Calu3 (cell line): ENCODE measurements at regions of chr3 and their contacts with region 1.

Region 1: GRCh38 chr3:107938143-107938542 is 152.7 kb downstream of the CD47 start:
- DNase-seq: peak; percentile 50
- H3K4me3 Mint-ChIP-seq: no peak overlapping the region
- H3K27ac Mint-ChIP-seq: peak overlapping the region; percentile 21
- H3K4me1 Mint-ChIP-seq: peaks cover 12% of the 10 kb centered on the region
- H3K27me3 Mint-ChIP-seq: no peaks in the 10 kb centered on the region
- CTCF ChIP-seq: no peak

Region 2: GRCh38 chr3:107916166-107916565 is 22.0 kb before region 1 on chr3:
- CTCF ChIA-PET with region 1: no interaction called
- intact Hi-C with region 1: no loop called
- DNase-seq: no peak
- H3K4me3 Mint-ChIP-seq: no peak overlapping the region
- H3K27ac Mint-ChIP-seq: no peak overlapping the region
- H3K4me1 Mint-ChIP-seq: no peaks in the 10 kb centered on the region
- H3K27me3 Mint-ChIP-seq: no peaks in the 10 kb centered on the region
- CTCF ChIP-seq: no peak

Region 3: DNA sequence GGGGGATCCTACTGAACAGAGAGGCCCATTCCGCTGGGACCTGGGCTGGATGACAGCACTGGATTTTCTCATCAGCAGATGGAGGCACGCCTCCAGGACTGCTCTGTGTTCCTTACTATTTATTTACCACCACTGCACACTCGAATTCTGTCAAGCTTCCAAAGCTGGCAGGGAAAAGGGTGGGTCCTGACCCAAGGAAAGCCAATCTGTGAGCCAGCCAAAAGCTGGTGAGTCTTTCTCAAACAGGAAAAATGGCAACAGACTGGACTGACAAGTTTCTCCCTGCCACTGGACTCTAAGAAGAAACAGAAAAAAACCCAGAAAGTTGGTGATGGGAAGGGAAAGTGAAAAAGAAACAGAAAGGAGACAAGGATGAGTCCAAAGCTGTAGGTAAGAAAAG is 114.9 kb after region 1 on chr3:
- CTCF ChIA-PET with region 1: interaction called, 4 read pairs
- intact Hi-C with region 1: loop called (anchors 10 kb)
- DNase-seq: peak; percentile 46
- H3K4me3 Mint-ChIP-seq: no peak overlapping the region
- H3K27ac Mint-ChIP-seq: peak overlapping the region; percentile 1
- H3K4me1 Mint-ChIP-seq: peaks cover 14% of the 10 kb centered on the region
- H3K27me3 Mint-ChIP-seq: no peaks in the 10 kb centered on the region
- CTCF ChIP-seq: no peak

Region 4: DNA sequence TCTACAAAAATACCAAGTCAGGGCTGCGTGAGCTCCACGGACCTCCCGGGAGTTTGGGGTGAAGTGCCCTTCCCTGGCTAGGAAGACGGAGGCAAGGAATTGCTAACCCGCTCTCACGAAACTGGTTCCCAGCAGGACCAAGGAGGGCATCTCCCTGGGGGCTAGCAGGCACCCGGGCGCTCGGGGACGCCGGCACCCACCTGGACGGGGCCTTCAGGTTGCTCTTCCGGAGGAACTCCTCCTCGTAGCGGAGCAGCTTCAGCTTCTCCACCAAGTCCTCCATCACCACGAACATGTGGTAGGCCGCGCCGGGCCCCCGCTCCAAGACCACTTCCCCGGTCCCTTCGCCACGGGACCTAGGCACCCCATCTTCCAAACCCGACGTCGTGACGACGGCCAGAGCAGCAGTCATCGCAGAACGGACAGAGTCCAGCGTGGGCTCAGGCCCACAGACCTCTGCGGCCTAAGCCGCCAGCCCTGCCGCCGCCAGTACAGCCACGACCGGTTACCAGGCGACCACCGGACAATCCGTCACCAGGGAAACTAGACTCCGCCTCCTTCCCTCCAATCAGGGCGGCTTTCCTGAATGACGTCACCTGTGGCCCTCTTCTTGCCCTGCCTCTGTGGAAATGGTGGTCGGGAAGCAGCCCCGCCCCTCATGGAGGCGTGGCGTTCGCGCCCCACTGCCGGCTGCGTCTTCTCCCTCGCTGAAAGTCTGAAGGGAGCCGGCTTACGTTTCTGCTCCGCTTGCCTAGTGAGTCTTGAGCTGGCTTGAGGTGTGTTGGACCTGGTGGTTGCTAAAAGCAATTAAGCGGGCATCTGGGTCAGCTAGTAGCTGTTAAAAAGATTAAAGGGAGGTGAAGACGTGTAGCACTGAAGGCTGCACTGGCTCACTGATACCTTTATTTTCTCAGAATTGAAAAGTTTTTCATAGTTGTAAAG is 284.0 kb after region 1 on chr3 and contains the start of gene IFT57:
- CTCF ChIA-PET with region 1: no interaction called
- intact Hi-C with region 1: loop called (anchors 10 kb)
- DNase-seq: peak; percentile 96
- H3K4me3 Mint-ChIP-seq: peak within 1 kb of the TSS; percentile 100
- H3K27ac Mint-ChIP-seq: peak within 1 kb of the TSS; percentile 99
- H3K4me1 Mint-ChIP-seq: peaks cover 24% of the 10 kb centered on the region
- H3K27me3 Mint-ChIP-seq: no peaks in the 10 kb centered on the region
- CTCF ChIP-seq: no peak
- total RNA-seq, gene IFT57: 35.4 and 47.2 TPM in 2 replicates

Region 5: DNA sequence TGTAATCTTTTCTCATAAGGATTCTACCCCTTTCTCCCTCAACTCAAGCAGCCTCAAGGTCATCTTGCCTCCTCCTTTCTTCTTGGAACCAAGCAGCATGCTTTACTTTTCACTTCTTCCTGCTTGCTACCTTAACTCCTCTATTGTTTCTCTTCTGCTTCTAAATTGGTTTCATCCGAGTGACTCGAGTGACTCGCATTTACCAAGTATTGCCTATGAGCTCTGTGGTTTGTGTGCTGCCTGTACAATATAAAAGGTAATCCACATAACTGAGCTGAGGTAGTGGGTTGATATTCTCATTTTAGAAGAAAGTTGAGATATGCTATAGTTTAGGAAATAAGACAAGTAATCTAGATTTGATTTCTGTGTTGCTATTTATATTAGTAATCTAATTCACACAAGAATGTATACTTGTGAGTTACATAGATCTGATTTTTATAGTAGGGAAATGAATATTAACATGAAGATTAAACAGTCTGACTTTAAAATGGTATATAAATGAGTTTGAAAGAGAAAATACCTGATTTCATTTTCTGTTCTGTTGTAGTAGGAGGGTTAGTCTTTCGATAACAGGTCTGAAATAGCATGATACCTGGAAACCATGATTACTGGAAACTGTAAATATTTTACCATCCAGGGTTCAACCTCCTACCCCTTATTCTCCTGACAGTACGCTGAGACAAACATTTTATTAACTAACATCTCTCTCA is 363.7 kb after region 1 on chr3:
- CTCF ChIA-PET with region 1: no interaction called
- intact Hi-C with region 1: loop called (anchors 10 kb)
- DNase-seq: no peak
- H3K4me3 Mint-ChIP-seq: peak overlapping the region; percentile 59
- H3K27ac Mint-ChIP-seq: peak overlapping the region; percentile 91
- H3K4me1 Mint-ChIP-seq: peaks cover 78% of the 10 kb centered on the region
- H3K27me3 Mint-ChIP-seq: no peaks in the 10 kb centered on the region
- CTCF ChIP-seq: no peak

Region 6: DNA sequence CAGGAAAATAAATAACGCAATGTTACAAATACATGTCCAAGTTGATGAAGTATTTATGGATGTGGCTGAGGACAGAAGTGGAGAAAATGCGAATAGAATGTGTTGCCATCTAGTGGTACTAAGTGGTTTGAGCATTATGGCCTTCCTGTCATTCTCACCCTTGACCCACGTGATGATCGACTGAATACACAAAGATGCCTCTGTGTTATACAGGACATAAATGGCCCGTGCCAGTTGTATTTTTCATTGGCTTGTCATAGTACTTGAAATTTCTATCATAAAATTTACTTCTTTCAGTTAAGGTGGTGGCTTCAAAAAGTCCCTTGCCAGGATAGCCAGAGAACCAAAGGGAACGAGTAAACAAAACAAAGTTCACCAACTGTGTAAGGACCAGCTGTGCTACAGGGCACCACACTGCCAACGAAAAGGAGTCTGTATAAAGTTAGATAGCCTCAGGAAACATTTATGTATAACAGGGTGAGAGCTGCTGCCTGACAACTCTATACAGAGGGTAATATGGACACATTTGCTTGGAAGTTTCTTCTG is 468.6 kb after region 1 on chr3:
- CTCF ChIA-PET with region 1: no interaction called
- intact Hi-C with region 1: loop called (anchors 10 kb)
- DNase-seq: peak; percentile 10
- H3K4me3 Mint-ChIP-seq: no peak overlapping the region
- H3K27ac Mint-ChIP-seq: no peak overlapping the region
- H3K4me1 Mint-ChIP-seq: peaks cover 5% of the 10 kb centered on the region
- H3K27me3 Mint-ChIP-seq: no peaks in the 10 kb centered on the region
- CTCF ChIP-seq: peak; percentile 11

Region 7: GRCh38 chr3:108477511-108478147 is 539.5 kb after region 1 on chr3:
- CTCF ChIA-PET with region 1: interaction called, 11 read pairs
- intact Hi-C with region 1: loop called (anchors 1 kb)
- DNase-seq: peak; percentile 58
- H3K4me3 Mint-ChIP-seq: no peak overlapping the region
- H3K27ac Mint-ChIP-seq: no peak overlapping the region
- H3K4me1 Mint-ChIP-seq: peaks cover 2% of the 10 kb centered on the region
- H3K27me3 Mint-ChIP-seq: no peaks in the 10 kb centered on the region
- CTCF ChIP-seq: peak; percentile 40